Posterior cingulate gyrus (tissue), 11 donors: ENCODE measurements at regions of chr12 and their contacts with region 1.

Region 1: DNA sequence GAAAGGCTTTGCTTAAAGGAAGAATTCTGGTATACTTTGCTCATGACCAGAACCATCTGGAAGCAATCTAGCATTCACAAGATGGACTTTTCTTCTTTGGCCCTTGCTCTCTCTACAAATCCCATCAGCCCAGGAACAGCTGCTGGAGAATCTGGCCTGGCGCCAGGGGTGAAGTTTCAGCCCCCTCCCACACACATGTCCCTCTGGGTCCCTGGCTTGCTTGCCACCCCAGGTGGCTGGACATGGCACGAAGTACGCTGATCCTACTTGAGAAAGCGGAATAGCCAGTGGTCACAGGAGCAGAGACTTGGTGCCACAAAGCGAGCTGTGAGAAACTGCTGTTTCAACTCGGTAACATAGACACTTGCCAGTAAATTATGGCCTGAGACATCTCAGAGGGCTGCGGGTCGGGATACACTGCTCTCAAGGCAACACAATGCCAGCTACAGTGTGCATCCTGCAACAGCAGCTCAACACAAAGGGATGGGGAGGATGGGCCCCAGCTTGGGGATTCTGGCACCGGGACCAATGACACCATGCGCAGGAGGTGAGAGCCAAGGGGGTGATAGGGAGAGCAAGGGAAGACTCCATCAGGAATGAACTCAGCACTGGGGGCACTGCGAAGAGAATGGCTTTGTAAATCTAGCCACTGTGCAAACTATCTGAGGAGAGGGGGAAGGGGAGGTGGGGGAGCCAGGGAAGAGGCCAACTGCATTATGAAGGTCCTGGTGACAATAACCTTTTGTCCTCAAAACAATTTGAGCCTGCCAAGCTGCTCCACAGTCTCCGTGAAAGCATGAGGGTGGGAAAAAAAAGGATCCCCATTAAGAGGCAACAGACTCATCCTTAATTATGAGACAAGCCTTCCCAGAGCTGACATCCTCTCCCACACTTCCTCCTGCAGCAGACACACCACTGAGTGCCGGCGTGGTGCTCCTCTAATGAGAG is 219.9 kb downstream of the PPM1H start:
- DNase-seq: peak in 8 of 10 donors; percentile 32 to 90 (median 46)

Region 2: DNA sequence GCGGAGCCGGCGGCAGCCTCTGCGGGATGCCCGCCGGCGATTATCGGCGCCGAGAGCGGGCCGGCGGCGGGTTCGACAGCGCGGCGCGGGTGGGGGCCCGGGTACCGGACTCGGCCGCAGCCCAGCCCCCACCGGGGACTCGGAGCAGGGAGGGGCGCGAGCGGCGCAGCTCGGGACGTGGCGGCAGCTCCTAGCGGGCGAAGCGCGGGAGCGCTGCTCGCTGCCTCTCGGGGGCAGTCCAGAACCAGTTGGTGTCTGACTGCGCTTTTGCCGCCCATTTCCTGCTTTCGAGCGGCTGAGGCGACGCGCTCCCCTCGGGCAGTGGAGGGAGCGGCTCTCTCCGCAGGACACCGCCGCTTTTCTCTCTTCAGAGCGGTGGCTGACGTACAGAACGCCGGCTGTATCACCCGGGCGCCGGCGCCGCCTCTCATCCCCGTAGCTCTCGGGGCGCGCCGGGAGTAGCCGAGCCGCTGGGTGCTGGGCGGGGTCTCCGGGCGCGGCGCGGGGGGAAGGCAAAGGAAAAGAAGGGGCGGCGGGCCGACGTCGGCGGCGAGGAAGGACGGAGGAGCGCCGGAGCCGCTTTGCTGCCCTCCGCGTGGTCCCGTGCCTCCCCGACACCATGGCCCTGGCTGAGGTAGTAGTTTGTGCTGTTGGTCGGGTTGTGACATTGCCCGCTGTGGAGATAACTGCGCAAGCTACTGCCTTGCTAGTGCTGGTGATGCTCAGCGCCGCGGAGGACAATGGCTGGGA is 111.8 kb before region 1 on chr12:
- intact Hi-C with region 1: loop called (anchors 10 kb)
- DNase-seq: peak; percentile 76 to 99 (median 88)

Region 3: GRCh38 chr12:62631471-62632410 is 83.3 kb before region 1 on chr12:
- intact Hi-C with region 1: loop called (anchors 10 kb)
- DNase-seq: peak; percentile 46 to 93 (median 66)

Region 4: DNA sequence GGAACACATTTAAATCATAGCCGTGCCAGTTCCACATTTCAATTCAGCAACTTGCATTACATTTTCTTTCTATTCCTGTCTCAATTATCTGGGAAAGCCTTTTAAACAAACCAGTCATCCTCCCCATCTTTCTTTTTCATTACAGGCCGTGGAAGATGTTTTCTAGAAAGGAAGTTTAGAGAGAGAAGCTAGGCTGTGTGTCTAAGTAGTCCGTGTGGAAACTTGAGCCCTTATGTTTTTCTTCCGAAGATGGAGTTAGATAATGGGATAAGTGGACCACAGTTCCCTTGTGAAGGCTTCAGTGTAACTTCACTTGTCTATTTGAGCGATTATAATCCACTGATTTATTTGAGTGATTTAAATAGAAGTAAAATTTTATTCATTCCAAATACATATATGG is 232.3 kb after region 1 on chr12:
- intact Hi-C with region 1: no loop called
- DNase-seq: no peak